ENCODE measurements at regions of chr10 and their contacts with region 1.

Region 1: DNA sequence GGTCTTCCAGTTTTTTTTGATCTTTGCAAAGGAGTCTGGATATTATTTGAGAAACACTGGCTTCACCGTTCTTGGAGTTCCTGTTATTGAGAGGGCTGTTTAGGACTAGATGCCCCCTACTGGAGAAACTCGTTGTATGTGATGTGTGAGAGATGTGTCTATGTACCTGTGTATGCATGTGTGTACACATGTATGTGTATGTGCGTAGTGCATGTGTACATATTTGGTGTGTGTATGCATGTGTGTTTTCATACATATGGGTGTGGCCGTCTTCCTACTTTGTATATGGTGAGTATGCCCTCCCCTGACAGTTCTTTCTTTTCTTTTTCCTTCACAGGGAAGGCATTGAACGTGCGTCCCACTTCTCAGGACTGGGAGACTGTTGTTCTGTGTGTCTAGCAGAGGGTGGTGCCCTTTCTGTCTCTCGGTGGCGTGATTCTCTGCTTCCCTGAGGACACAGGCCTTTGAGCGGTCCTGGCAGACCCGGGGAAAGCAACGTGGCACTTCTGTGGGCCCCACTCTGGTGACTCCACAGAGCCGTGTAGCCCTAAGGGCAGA is 3.0 kb upstream of the CALHM3 start:
- DNase-seq: no peak
- H3K4me3 ChIP-seq: no peak overlapping the region
- H3K27ac ChIP-seq: no peak overlapping the region
- H3K4me1 ChIP-seq: peaks cover 0 to 4% of the 10 kb centered on the region in 2 donors
- H3K27me3 ChIP-seq: no peaks in the 10 kb centered on the region
- CTCF ChIP-seq: peak in 5 of 6 experiments; percentile 22 to 53 (median 45)
- POLR2A ChIP-seq: no peak

Region 2: DNA sequence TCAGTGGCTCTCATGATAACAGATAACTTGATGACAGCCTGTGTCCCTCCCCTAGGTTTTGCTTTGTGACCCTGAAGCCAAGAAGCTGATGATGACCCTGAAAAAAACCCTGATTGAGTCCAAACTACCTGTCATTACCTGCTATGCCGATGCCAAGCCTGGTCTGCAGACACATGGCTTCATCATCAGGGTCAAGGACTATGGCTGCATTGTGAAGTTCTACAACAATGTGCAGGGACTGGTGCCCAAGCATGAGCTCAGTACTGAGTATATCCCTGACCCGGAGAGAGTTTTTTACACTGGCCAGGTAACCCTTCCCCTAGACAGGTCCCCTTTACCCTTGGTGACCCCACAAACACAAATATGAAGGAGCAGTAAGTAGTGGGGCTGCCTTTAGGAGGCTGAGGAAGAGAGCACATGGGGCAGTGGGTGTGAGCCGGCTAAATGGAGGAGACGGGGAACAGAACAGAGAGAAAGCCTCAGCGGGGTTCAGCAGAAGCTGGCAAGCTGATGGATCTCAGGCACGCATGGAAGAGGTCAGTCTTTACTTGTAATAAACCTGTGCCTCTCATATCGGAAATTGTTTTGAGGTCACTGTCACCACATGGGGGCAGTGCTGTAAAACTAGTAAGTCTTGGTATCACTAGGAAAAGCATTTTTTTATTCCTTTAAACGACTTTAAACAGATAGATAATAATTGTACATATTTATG is 65.5 kb before region 1 on chr10:
- intact Hi-C with region 1: loop called (anchors 2 kb)
- DNase-seq: peak; percentile 64 to 66
- H3K4me3 ChIP-seq: no peak overlapping the region
- H3K27ac ChIP-seq: no peak overlapping the region
- H3K4me1 ChIP-seq: no peaks in the 10 kb centered on the region
- H3K27me3 ChIP-seq: no peaks in the 10 kb centered on the region
- CTCF ChIP-seq: peak in 4 of 6 experiments; percentile 45 to 62 (median 57)
- POLR2A ChIP-seq: no peak

Region 3: GRCh38 chr10:103448746-103449145 is 33.3 kb before region 1 on chr10:
- intact Hi-C with region 1: no loop called
- DNase-seq: no peak
- H3K4me3 ChIP-seq: no peak overlapping the region
- H3K27ac ChIP-seq: peak overlapping the region in 2 of 3 donors; percentile 61 to 81
- H3K4me1 ChIP-seq: peaks cover 10 to 47% of the 10 kb centered on the region in 2 donors
- H3K27me3 ChIP-seq: no peaks in the 10 kb centered on the region
- CTCF ChIP-seq: no peak
- POLR2A ChIP-seq: no peak